Activated CD4-positive, alpha-beta memory T cell treated with anti-CD3 and anti-CD28 coated beads, Interleukin-2, amount 10 ng/mL, durations not matched to agents 7 days and 5 days (primary cell): ENCODE measurements at regions of chr3 and their contacts with region 1.

Region 1: GRCh38 chr3:112642912-112643506 is 2.1 kb upstream of the CCDC80 start:
- DNase-seq: peak; percentile 88
- H3K4me3 Mint-ChIP-seq: peak overlapping the region; percentile 49
- H3K27ac Mint-ChIP-seq: peak overlapping the region; percentile 62
- H3K4me1 Mint-ChIP-seq: peaks cover 30% of the 10 kb centered on the region
- H3K27me3 Mint-ChIP-seq: peaks cover 5% of the 10 kb centered on the region

Region 2: DNA sequence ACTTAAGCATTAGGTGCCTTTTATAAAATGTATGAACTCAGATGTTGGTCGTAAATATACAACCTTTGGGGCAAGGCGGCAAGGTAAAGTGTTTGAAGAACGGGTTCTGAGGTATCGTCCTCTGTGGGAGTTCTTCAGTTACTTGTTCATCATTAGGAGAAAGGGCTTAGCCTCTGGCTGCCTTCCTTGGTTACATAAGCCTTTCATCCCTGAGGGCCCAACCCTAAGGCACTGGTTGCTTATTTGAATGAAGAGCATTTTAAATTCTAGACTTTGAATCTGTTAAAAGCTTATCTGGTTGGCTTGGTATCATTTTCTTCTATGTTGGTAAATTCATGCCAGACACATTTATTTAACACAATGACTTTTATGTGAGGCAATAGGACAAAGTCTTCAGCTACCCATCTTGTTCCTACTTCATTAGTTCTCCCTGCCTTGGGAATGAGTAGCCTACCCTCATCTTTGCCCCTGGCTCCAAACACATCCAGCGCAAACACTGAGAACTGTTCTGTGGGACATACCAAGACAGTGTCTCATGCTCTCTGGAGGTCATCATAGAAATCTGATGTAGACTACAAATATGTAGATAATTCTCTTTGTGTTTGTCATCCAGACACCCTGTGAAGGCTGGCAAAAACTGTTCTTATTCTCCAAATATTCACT is 10.3 kb after region 1 on chr3:
- CTCF ChIA-PET with region 1: interaction called, 15 read pairs
- POLR2A ChIA-PET with region 1: interaction called, 5 read pairs
- DNase-seq: no peak
- H3K4me3 Mint-ChIP-seq: no peak overlapping the region
- H3K27ac Mint-ChIP-seq: no peak overlapping the region
- H3K4me1 Mint-ChIP-seq: peaks cover 24% of the 10 kb centered on the region
- H3K27me3 Mint-ChIP-seq: no peaks in the 10 kb centered on the region

Region 3: DNA sequence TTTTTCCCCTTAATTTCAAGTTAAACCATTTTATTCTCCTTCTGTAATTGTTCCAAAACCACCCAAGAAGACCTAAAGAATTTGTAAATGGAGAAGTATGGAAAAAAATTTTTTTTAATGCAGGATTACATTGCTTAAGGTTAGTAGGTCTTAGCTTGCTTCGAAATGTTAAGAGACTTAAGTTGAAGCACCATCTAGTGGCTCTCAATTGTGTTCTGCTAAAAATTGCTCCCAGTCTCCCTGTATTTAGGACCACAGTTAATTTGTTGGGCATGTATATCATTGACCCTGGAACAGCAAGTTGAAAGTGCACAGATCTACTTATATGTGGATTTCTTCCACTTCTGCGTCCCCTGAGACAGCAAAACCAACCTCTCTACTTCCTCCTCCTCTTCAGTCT is 171.3 kb after region 1 on chr3:
- CTCF ChIA-PET with region 1: interaction called, 28 read pairs
- POLR2A ChIA-PET with region 1: no interaction called
- DNase-seq: no peak
- H3K4me3 Mint-ChIP-seq: no peak overlapping the region
- H3K27ac Mint-ChIP-seq: no peak overlapping the region
- H3K4me1 Mint-ChIP-seq: peaks cover 24% of the 10 kb centered on the region
- H3K27me3 Mint-ChIP-seq: no peaks in the 10 kb centered on the region

Region 4: DNA sequence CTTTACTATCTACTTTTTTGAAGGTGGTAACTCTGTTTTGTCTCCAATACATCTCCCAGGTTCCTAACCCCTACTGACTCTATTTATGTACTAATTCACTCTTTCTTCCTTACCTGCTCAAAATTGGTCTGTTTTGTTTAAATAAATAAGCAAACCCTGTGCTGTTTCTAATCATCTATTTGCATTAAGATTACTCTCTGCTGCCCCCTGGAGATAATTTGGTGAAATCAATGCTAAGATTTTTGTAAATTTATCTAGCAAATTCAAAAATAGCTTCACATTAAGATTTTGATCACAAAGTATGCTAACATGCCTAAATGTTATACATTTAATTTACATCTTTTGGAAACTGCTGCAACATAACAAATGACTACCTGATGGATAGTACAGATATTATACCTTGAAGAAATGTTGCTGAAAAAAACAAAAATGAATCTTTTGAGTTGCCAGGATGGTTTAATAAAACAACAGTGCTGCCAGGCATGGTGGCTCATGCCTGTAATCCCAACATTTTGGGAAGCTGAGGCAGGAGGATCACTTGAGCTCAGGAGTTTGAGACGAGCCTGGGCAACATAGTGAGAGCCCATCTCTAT is 336.3 kb after region 1 on chr3:
- CTCF ChIA-PET with region 1: interaction called, 47 read pairs
- POLR2A ChIA-PET with region 1: interaction called, 9 read pairs
- DNase-seq: no peak
- H3K4me3 Mint-ChIP-seq: no peak overlapping the region
- H3K27ac Mint-ChIP-seq: no peak overlapping the region
- H3K4me1 Mint-ChIP-seq: peaks cover 56% of the 10 kb centered on the region
- H3K27me3 Mint-ChIP-seq: no peaks in the 10 kb centered on the region

Region 5: DNA sequence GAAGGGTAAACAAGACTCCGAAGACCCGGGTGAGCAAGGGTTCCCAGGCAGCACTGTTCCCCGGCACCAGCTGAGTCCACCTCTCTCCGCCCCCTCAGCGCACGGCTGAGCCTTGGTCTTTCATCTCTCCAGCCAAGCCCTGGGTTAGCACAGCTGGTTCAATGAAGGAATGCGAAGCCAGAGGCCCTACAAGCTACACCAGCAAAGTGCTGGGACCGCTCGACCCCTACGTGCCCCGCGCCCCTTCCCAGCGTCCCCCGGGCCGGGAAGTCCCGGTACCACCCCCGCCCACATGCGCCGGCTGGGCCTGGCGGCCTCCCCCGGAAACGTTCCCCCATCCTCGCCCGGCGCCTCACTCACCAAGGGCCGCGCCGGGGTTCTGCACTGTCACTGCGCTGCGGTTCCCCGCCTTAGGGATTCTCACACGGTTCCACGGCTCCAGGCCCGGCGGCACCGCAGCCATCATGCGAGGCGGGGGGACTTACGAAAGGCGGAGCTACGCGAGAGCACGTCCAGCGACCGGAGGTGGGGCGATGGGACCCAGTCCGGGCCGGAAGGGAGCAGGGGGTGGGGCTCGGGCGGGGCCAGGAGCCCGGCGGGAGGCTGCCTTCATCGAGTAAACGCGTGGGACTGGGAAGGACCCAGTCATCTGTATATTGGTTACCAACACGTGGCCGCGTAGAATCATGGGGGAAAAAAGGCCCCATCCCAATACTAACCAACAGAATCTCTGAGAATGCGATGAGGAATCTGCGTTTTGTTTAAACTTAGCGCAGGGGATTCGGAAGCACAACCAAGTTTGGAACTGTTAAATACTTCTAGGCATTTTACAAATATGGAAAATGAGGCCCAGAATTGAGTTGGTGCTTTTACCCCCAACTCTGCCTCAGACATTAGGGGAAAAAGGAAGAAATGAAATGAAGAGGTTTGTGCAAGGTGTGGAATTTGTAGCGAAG is 376.5 kb after region 1 on chr3:
- CTCF ChIA-PET with region 1: interaction called, 15 read pairs
- POLR2A ChIA-PET with region 1: no interaction called
- DNase-seq: peak; percentile 86
- H3K4me3 Mint-ChIP-seq: peak overlapping the region; percentile 80
- H3K27ac Mint-ChIP-seq: peak overlapping the region; percentile 84
- H3K4me1 Mint-ChIP-seq: peaks cover 44% of the 10 kb centered on the region
- H3K27me3 Mint-ChIP-seq: no peaks in the 10 kb centered on the region